ENCODE measurements at regions of chr5 and their contacts with region 1.

Region 1: DNA sequence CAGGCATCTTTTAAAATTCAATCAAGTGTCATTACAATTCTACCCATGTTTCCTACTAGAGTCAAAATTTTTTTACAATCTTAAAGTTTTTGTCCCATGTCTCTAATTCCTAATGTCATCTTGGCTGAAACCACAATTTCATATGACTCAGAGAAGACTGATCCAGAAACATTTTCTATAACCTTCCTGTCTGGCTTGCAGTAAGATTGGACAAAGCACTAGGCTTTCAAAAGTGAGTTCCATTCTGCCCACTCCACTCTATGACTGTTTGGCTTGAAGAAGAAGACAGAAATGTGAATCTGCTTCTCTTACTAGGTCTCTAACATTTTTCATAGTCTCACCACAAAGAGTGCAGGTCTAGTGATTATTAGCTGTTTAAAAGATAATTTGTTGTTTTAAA is 88.8 kb downstream of the NR3C1 start:
- DNase-seq: peak; percentile 73
- H3K4me3 ChIP-seq: no peak overlapping the region
- H3K27ac ChIP-seq: peak overlapping the region; percentile 92
- H3K4me1 ChIP-seq: peaks cover 87% of the 10 kb centered on the region
- H3K27me3 ChIP-seq: no peaks in the 10 kb centered on the region
- CTCF ChIP-seq: no peak

Region 2: GRCh38 chr5:143200781-143201398 is 113.8 kb before region 1 on chr5:
- CTCF ChIA-PET with region 1: no interaction called
- dilution Hi-C with region 1: no loop called
- in situ Hi-C with region 1: no loop called
- intact Hi-C with region 1: loop called (anchors 2 kb)
- DNase-seq: peak; percentile 96
- H3K4me3 ChIP-seq: no peak overlapping the region
- H3K27ac ChIP-seq: peak overlapping the region; percentile 68
- H3K4me1 ChIP-seq: peaks cover 67% of the 10 kb centered on the region
- H3K27me3 ChIP-seq: no peaks in the 10 kb centered on the region
- CTCF ChIP-seq: no peak

Region 3: GRCh38 chr5:143217065-143217803 is 97.4 kb before region 1 on chr5:
- CTCF ChIA-PET with region 1: interaction called, 10 read pairs
- dilution Hi-C with region 1: no loop called
- in situ Hi-C with region 1: no loop called
- intact Hi-C with region 1: no loop called
- DNase-seq: no peak
- H3K4me3 ChIP-seq: no peak overlapping the region
- H3K27ac ChIP-seq: no peak overlapping the region
- H3K4me1 ChIP-seq: peaks cover 6% of the 10 kb centered on the region
- H3K27me3 ChIP-seq: no peaks in the 10 kb centered on the region
- CTCF ChIP-seq: no peak

Region 4: DNA sequence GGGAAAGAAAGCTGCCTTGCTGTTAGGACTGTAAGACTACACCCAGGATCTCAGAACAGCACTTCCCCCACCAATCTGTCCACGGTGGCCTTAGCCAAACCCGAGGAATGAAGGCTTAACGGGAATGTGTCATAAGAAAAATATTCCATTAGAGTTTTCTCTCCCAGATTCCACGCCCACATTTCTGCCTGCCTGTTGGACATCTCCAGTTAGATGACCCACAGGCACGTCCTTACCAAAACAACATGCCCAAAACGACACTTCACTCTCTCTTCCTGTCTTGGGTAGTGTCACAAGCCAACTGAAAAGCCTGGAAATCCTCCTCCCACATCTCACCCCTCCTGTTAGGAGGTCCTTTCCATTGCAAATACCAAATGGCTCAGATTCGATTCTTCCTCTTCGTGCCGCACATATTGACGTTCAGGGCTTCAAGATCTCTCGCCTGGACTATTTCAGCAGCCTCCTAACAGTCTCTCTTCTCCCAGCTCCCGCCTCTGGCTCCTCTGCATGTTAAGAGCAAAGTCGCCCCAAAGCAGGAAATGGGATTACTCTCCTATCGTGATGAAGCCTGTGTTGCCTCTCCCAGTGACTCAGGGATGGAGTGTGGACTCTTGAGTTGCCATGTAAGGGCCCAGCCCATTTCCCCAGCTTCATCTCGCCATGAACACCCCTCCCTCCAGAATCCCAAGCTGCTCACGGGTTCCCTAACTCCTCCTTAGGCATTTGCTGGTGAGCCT is 70.5 kb before region 1 on chr5:
- CTCF ChIA-PET with region 1: no interaction called
- dilution Hi-C with region 1: no loop called
- in situ Hi-C with region 1: no loop called
- intact Hi-C with region 1: loop called (anchors 2 kb)
- DNase-seq: peak; percentile 95
- H3K4me3 ChIP-seq: peak overlapping the region; percentile 15 to 35 (median 31)
- H3K27ac ChIP-seq: peak overlapping the region; percentile 99
- H3K4me1 ChIP-seq: peaks cover 55% of the 10 kb centered on the region
- H3K27me3 ChIP-seq: no peaks in the 10 kb centered on the region
- CTCF ChIP-seq: no peak

Region 5: DNA sequence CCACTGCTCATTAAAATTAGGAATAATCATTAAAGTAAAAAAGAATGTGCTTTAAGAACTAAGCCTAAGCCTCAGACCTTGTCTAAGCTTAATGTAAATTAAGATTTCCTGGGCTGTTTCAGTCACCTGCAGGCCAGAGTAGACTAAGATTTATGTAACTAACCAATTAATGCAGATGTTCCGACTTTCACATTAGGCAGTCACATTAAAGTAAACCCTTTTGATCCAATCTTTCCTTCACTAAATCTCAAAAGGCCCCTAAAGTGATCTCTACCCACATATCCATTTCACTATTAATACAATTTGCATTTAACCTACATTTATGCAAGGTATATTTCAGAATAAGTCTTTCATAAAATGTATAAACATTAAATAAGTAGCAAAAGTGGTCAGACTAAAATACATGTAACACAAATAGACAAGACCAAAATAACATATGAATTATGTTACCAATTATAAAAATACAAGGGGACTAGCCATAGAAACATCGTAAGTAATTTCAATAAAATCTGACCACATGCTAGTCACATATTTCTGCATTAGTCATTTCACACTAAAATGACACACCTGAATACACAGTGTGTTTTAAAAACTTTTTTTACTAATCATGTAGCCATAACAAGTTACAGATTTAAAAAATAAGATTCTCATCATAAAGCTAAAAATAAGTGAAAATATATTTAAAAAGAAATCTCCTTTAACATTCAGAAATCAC is 81.1 kb after region 1 on chr5:
- CTCF ChIA-PET with region 1: no interaction called
- dilution Hi-C with region 1: loop called (anchors 5 kb)
- in situ Hi-C with region 1: loop called in 1 of 2 experiments (anchors 10 kb)
- intact Hi-C with region 1: loop called (anchors 2 kb)
- DNase-seq: peak; percentile 58
- H3K4me3 ChIP-seq: peak overlapping the region; percentile 72 to 83 (median 78)
- H3K27ac ChIP-seq: peak overlapping the region; percentile 97
- H3K4me1 ChIP-seq: peaks cover 14% of the 10 kb centered on the region
- H3K27me3 ChIP-seq: no peaks in the 10 kb centered on the region
- CTCF ChIP-seq: no peak

Region 6: GRCh38 chr5:143506881-143507551 is 192.4 kb after region 1 on chr5:
- CTCF ChIA-PET with region 1: no interaction called
- dilution Hi-C with region 1: no loop called
- in situ Hi-C with region 1: no loop called
- intact Hi-C with region 1: loop called (anchors 5 kb)
- DNase-seq: peak; percentile 90
- H3K4me3 ChIP-seq: no peak overlapping the region
- H3K27ac ChIP-seq: peak overlapping the region; percentile 15
- H3K4me1 ChIP-seq: peaks cover 18% of the 10 kb centered on the region
- H3K27me3 ChIP-seq: no peaks in the 10 kb centered on the region
- CTCF ChIP-seq: peak in 1 of 2 donors; percentile 49

Region 7: GRCh38 chr5:143557061-143557818 is 242.6 kb after region 1 on chr5:
- CTCF ChIA-PET with region 1: no interaction called
- dilution Hi-C with region 1: no loop called
- in situ Hi-C with region 1: no loop called
- intact Hi-C with region 1: loop called (anchors 10 kb)
- DNase-seq: peak; percentile 29
- H3K4me3 ChIP-seq: no peak overlapping the region
- H3K27ac ChIP-seq: no peak overlapping the region
- H3K4me1 ChIP-seq: peaks cover 17% of the 10 kb centered on the region
- H3K27me3 ChIP-seq: no peaks in the 10 kb centered on the region
- CTCF ChIP-seq: no peak